OCI-LY7 (cell line): ENCODE measurements at regions of chr14 and their contacts with region 1.

Region 1: DNA sequence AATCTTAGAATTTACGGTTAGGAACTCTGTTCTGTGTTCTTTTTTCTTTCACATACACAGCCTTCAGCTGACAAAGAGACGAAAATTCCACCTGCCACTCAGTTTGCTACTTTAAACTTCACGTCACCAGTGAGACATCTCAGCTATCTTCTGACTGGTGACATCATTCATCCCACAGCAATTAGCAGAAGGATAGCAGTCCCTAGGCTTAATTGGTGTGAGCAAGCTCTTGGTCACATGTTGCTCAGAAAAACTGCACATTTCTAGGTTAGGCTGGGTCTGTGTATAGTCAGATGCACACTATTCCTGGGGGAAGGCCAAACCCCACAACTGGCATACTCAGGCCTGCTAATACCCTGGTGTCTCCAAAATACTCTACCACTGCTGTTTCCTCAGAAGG is 23.9 kb downstream of the SLC7A7 start:
- DNase-seq: no peak
- H3K4me3 ChIP-seq: peak overlapping the region; percentile 33
- H3K27ac ChIP-seq: peak overlapping the region; percentile 90
- H3K4me1 ChIP-seq: peaks cover 72% of the 10 kb centered on the region
- CTCF ChIP-seq: no peak

Region 2: GRCh38 chr14:22653012-22653621 is 138.2 kb before region 1 on chr14:
- CTCF ChIA-PET with region 1: no interaction called
- POLR2A ChIA-PET with region 1: no interaction called
- intact Hi-C with region 1: no loop called
- DNase-seq: peak; percentile 72
- H3K4me3 ChIP-seq: no peak overlapping the region
- H3K27ac ChIP-seq: no peak overlapping the region
- H3K4me1 ChIP-seq: no peaks in the 10 kb centered on the region
- CTCF ChIP-seq: peak; percentile 84

Region 3: DNA sequence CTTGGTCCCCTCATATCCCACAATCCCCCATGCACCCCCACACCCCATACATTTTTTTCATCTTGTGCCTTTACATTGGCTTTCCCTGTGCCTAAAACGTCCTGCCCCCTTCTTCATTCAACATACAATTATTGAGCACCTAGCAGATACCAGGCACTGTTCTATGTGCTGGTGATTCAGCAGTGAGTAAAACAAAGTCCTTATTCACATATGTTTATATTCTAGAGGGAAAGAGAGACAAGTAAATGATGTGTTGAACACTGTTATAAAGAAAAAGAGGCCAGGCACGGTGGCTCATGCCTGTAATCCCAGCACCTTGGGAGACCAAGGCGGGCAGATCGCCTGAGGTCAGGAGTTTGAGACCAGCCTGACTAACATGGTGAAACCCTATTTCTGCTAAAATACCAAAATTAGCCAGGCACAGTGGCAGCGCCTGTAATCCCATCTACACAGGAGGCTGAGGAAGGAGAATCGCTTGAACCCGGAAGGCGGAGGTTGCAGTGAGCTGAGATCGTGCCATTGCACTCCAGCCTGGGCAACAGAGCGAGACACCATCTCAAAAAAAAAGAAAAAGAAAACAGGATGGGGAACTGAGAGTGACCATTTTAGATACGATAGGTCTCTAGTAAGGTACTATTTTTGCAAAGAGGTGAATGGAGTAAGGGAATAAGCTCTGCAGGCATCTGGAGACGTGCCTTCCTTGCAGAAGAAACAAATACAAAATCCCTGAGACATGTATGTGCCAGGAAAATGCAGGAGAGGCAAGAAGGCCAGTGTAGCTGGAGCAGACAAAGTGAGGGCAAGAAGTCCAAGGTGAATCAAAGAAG is 11.8 kb after region 1 on chr14:
- CTCF ChIA-PET with region 1: interaction called, 5 read pairs
- POLR2A ChIA-PET with region 1: interaction called, 21 read pairs
- intact Hi-C with region 1: no loop called
- DNase-seq: peak; percentile 53
- H3K4me3 ChIP-seq: peak overlapping the region; percentile 55
- H3K27ac ChIP-seq: peak overlapping the region; percentile 85
- H3K4me1 ChIP-seq: peaks cover 91% of the 10 kb centered on the region
- CTCF ChIP-seq: no peak

Region 4: DNA sequence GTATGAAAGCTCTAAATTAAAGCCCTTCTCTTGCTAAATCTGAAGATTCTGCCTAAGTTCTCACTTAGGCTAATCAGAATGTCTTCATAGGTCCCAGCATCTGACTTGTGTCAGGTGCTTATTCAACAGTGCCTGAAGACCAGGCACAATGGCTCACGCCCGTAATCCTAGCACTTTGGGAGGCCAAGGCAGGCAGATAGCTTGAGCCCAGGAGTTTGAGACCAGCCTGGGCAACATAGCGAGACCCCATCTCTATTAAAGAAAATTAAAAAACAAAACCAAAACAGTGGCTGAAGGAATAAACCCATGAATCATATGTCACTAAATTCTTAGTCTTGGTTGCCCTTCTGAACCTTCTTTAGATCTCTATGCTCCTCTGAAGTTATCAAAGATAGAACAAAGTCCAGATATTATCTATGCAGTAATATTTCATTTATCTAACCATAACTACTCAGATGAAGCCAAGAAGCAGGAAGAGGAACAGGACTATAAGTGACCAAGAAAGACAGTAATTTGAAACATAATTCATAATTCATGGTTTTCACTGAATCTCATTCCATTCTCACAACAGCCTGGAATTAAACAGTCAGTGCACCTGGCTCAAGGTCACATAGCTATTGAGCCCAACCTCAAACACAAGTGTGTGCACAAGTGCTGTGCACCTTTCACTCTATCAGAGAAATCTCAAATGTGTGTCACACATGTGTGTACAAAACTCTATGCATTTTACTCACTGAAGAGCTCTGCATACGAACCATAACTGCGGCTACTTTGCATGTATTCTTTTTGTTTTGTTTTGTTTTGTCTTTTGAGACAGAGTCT is 17.3 kb after region 1 on chr14:
- CTCF ChIA-PET with region 1: interaction called, 5 read pairs
- POLR2A ChIA-PET with region 1: interaction called, 37 read pairs
- intact Hi-C with region 1: no loop called
- DNase-seq: no peak
- H3K4me3 ChIP-seq: peak overlapping the region; percentile 31
- H3K27ac ChIP-seq: peak overlapping the region; percentile 48
- H3K4me1 ChIP-seq: peaks cover 85% of the 10 kb centered on the region
- CTCF ChIP-seq: no peak

Region 5: DNA sequence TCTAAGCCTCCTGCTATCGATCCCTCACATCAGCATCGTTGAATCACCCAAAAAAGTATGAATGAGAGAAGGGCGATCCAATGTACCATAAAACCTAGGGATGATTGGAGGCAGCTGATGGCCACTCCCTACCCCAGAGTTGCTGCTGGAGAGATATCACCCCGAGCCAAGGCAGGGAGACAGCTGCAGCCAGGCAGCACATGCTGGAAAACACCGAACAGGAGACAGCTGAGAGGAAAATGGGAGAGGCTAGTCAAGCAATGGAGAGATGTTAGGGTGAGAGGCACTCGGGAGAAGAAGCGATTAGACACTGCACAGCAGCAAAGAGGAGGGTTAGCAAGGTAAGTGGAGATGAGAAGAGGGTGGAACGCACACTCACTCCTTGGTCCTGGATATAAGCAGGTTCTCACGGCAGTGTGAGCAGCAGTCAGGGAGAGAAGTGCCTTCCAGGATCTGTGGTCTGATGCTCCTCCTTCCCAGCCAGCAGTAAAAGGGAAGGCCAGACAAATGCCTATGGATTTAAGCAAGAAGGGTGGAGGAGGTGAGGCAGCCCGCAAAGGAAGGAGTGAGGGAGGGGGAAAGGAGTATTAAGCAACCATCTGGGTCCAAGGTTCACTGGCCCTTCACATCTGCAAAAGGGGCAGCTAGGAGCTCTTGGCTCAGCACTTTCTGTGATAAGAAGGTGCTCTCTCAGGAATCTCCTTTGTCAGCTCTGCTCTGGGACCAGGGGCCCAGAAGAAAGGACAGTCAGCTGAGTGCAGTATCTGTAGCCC is 23.8 kb after region 1 on chr14 and contains the start of gene SLC7A7:
- CTCF ChIA-PET with region 1: no interaction called
- POLR2A ChIA-PET with region 1: interaction called, 37 read pairs
- intact Hi-C with region 1: loop called (anchors 2 kb)
- DNase-seq: peak; percentile 54
- H3K4me3 ChIP-seq: peak within 1 kb of the TSS; percentile 73
- H3K27ac ChIP-seq: peak within 1 kb of the TSS; percentile 86
- H3K4me1 ChIP-seq: peaks cover 77% of the 10 kb centered on the region
- CTCF ChIP-seq: no peak
- total RNA-seq, gene SLC7A7: 30.6 and 32.7 TPM in 2 replicates

Region 6: DNA sequence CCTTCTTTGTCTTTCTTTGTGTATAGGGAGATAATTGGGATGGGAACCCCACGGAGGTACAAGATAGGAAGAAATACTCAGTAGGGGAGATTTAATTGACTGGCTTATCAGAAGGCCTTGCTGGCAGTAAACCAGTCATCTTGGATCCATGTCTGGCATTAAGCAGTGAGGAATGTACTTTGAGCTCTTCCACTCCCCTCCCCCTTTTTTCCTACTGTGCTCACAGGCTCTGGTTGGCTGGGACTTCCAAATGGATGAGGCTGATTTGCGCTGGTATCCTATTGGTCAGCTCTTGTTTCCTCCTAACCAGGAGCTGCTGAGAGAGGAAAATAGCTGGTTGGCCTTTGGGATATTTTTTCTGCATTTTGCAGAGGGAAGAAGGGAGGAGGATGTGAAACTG is 702.9 kb after region 1 on chr14:
- CTCF ChIA-PET with region 1: no interaction called
- POLR2A ChIA-PET with region 1: no interaction called
- intact Hi-C with region 1: no loop called
- DNase-seq: no peak
- H3K4me3 ChIP-seq: no peak overlapping the region
- H3K27ac ChIP-seq: no peak overlapping the region
- H3K4me1 ChIP-seq: no peaks in the 10 kb centered on the region
- CTCF ChIP-seq: no peak